ENCODE measurements at regions of chr4 and their contacts with region 1.

Region 1: DNA sequence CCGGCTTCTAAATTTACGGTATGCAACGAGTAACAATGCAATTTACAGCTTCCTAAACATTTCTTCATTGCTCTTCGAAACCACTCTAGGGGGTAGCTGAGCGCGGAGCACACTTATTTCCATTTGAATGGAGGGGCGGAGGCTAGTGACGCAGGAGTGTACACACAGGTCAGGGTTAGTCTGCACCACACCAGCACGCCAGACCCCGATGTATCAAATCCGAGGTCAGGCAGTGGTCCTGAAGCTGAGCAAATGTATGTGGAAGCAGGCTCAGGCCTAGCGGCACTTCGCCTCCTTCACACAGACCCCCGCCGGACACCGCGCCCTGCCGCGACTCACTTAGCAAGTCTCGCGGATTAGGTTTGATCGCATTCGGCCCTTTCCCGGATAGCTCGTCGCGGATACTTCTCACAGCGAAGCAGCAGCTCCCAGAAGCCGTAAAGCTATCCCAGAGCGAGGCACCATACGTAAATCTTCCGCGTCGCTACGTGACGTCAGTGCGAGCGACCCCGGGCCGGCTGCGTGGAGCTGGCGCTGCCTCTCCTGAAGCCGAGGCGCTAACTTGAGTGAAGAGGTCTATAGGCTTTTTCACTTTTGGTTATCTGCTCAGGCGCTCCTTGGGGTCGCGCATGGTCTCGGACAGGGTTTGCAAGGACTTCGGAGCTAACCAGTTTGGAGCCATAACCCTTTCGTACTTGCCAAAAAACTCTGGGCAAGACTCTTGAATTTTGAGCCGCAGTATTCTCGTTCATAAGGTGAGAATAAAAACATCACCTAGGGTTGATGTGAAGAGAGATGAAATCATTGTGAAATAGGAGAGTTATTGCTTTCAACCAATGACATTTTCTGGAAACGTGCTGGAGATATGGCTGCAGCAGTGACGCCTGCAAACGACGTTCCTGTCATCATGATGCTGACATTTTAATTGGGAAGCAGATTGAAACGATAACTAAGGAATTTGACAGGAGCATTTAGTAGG is at the start of gene AASDH:
- DNase-seq: peak; percentile 97
- ATAC-seq: peak; percentile 92
- H3K4me3 Mint-ChIP-seq: peak within 1 kb of the TSS; percentile 93
- H3K27ac Mint-ChIP-seq: peak within 1 kb of the TSS; percentile 99
- H3K4me1 Mint-ChIP-seq: peaks cover 39% of the 10 kb centered on the region
- H3K27me3 Mint-ChIP-seq: no peaks in the 10 kb centered on the region
- CTCF ChIP-seq: no peak
- total RNA-seq, gene AASDH: 14.5 to 14.7 TPM

Region 2: GRCh38 chr4:56372774-56373173 is 14.5 kb before region 1 on chr4:
- CTCF ChIA-PET with region 1: no interaction called
- POLR2A ChIA-PET with region 1: interaction called, 11 read pairs
- intact Hi-C with region 1: no loop called
- DNase-seq: no peak
- ATAC-seq: no peak
- H3K4me3 Mint-ChIP-seq: no peak overlapping the region
- H3K27ac Mint-ChIP-seq: no peak overlapping the region
- H3K4me1 Mint-ChIP-seq: peaks cover 3% of the 10 kb centered on the region
- H3K27me3 Mint-ChIP-seq: no peaks in the 10 kb centered on the region
- CTCF ChIP-seq: no peak

Region 3: DNA sequence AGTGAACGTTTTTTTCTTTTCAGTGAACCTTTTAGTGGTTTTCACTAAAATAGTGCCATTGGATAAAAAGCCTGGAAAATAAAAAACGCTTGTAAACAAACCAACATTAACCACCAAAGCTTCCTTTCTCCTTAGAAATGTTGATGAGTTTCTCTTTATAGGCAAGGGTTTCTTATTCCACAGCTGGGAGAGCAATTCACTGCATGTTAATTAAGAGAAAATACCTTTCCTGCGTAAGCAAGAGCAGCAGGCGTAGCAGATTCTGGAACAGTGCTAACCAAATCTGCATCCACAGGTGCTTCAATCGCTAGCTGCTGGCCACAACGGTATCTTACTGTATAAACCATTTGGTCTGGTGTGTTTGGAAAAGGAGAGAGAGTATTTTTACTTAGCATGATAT is 13.2 kb after region 1 on chr4:
- CTCF ChIA-PET with region 1: interaction called, 4 read pairs
- POLR2A ChIA-PET with region 1: interaction called, 10 read pairs
- intact Hi-C with region 1: no loop called
- DNase-seq: no peak
- ATAC-seq: no peak
- H3K4me3 Mint-ChIP-seq: no peak overlapping the region
- H3K27ac Mint-ChIP-seq: no peak overlapping the region
- H3K4me1 Mint-ChIP-seq: no peaks in the 10 kb centered on the region
- H3K27me3 Mint-ChIP-seq: no peaks in the 10 kb centered on the region
- CTCF ChIP-seq: no peak

Measured in activated CD8-positive, alpha-beta T cell treated with anti-CD3 and anti-CD28 coated beads for 36 hours (primary cell).